A673 (cell line): ENCODE measurements at regions of chr7 and their contacts with region 1.

Region 1: DNA sequence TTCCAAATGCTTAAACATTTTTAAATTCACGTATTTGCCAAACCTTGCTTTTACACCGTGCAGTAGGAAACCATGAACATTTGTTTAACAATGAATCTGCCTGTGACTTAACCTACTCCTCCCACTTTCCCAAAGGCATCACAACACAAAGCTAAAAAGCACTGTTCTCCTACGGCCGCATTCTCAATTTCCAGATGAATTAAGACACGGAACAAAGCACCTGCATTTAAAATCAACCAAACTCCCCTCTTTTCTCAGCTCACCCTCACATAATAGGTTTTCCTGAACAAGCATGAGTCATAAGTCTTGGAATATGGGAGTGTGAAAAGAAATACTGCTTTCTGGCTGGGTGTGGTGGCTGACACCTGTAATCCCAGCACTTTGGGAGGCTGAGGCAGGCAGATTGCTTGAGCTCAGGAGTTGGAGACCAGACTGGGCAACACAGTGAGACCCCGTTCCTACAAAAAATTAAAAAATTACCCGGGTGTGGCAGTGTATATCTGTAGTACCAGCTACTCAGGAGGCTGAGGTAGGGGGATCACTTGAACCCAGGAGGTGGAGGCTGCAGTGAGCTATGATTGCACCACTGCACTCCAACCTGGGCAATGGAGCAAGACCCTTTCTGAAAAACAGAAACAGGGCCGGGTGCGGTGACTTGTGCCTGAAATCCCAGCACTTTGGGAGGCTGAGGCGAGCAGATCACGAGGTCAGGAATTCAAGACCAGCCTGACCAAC is 51.7 kb upstream of the CYTH3 start:
- DNase-seq: no peak
- H3K4me3 ChIP-seq: no peak overlapping the region
- H3K27ac ChIP-seq: no peak overlapping the region
- H3K4me1 ChIP-seq: no peaks in the 10 kb centered on the region
- H3K27me3 ChIP-seq: no peaks in the 10 kb centered on the region
- CTCF ChIP-seq: no peak

Region 2: DNA sequence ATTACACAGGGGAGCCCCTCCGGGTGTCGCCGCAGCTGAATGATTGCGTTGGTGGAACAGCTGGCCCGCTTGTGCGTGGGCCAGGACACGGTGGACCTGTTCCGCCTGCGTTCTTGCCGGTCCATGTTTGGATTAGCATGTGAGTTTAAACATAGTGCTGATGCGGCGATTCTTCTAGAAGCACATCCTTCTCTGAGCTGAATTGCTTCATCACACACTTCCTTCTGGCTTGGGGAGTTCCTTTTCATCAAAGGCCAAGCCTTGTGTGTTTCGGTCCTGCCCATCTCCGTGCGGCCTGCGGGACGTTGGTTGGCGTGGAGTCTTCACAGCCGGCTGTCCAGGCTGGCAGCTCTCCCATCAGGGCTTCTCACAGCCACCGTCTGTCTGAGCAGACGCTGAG is 1086.8 kb before region 1 on chr7:
- CTCF ChIA-PET with region 1: no interaction called
- POLR2A ChIA-PET with region 1: interaction called, 14 read pairs
- intact Hi-C with region 1: no loop called
- DNase-seq: no peak
- H3K4me3 ChIP-seq: no peak overlapping the region
- H3K27ac ChIP-seq: no peak overlapping the region
- H3K4me1 ChIP-seq: peaks cover 9% of the 10 kb centered on the region
- H3K27me3 ChIP-seq: no peaks in the 10 kb centered on the region
- CTCF ChIP-seq: no peak

Region 3: DNA sequence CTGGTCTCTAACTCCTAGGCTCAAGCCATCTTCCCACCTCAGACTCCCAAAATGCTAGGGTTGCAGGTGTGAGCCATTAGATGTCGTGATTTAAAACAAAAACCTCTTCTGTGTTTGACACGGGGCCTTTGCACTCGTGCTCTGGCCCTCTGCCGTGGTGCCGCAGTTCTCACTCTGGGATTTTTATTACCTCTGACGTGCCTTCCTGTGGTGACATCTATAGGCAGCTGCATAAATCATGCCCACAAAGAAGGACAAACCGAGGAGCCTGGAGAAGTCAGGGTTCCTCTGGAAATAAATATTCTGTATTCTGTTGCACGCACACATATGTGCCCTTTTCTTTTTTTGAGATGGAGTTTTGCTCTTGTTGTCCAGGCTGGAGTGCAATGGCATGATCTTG is 469.4 kb before region 1 on chr7:
- CTCF ChIA-PET with region 1: no interaction called
- POLR2A ChIA-PET with region 1: no interaction called
- intact Hi-C with region 1: loop called (anchors 5 kb)
- DNase-seq: peak; percentile 36
- H3K4me3 ChIP-seq: no peak overlapping the region
- H3K27ac ChIP-seq: no peak overlapping the region
- H3K4me1 ChIP-seq: no peaks in the 10 kb centered on the region
- H3K27me3 ChIP-seq: no peaks in the 10 kb centered on the region
- CTCF ChIP-seq: no peak

Region 4: GRCh38 chr7:5997222-5997808 is 326.8 kb before region 1 on chr7:
- CTCF ChIA-PET with region 1: interaction called, 8 read pairs
- POLR2A ChIA-PET with region 1: no interaction called
- intact Hi-C with region 1: loop called (anchors 5 kb)
- DNase-seq: peak; percentile 82
- H3K4me3 ChIP-seq: no peak overlapping the region
- H3K27ac ChIP-seq: no peak overlapping the region
- H3K4me1 ChIP-seq: peaks cover 18% of the 10 kb centered on the region
- H3K27me3 ChIP-seq: no peaks in the 10 kb centered on the region
- CTCF ChIP-seq: peak; percentile 80

Region 5: DNA sequence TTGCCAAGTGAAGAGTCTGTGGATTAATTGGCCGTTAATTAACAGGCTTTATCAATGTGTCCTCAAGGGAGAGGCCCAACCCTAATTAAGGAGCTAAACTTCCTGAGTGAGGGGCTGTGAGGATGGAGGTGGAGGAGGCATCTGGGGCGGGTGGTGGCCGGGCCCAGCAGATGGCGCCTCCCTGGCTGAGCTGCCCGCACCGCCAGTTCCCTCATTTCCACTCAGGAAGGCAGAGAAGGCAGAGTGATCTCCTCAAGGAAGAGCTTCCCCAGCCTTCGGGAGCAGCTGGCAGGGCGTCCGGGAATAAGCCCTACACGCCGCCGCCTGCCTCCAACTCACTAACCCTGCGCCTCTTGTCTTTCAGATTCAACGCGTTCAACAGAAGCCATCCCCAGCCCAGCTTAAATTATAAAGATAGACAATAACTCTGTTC is 163.9 kb before region 1 on chr7:
- CTCF ChIA-PET with region 1: interaction called, 12 read pairs
- POLR2A ChIA-PET with region 1: no interaction called
- intact Hi-C with region 1: loop called (anchors 1 kb)
- DNase-seq: peak; percentile 61
- H3K4me3 ChIP-seq: no peak overlapping the region
- H3K27ac ChIP-seq: peak overlapping the region; percentile 37
- H3K4me1 ChIP-seq: no peaks in the 10 kb centered on the region
- H3K27me3 ChIP-seq: no peaks in the 10 kb centered on the region
- CTCF ChIP-seq: peak; percentile 78